Activated CD4-positive, alpha-beta T cell treated with anti-CD3 and anti-CD28 coated beads, Interleukin-2, amount 10 ng/mL, durations not matched to agents 24 days and 14 days (primary cell): ENCODE measurements at regions of chr9 and their contacts with region 1.

Region 1: GRCh38 chr9:84759300-84759750 is 89.8 kb downstream of the NTRK2 start:
- DNase-seq: peak; percentile 82
- H3K4me3 Mint-ChIP-seq: peak overlapping the region; percentile 60
- H3K27ac Mint-ChIP-seq: peak overlapping the region; percentile 85
- H3K4me1 Mint-ChIP-seq: peaks cover 37% of the 10 kb centered on the region
- H3K27me3 Mint-ChIP-seq: no peaks in the 10 kb centered on the region

Region 2: DNA sequence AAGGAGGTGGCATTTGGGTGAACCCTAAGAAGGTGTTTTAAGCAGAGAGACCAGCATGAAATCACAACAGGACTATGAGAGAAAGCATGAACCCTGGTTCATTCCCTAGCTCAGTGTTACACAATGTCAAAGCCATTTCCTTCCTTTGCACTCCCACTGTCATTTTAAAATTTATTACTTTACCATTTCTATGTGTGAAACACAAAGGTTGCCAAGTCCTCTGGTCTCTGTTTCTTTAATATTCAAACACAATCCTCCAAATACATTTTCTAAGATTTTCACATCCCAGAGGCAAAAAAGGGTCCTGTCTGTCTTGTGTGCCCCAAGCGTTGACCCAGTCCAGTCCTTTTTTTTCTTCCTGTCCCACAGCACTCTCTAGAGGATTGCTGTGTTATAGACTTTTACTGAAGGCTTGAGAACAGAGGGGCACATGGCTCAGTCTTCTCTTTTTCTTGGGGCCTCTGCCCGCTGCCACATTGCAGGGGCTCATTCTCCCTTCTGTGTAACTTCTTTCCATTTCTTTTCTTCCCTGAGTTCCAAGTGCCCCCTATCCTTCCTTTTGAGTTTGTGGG is 340.2 kb before region 1 on chr9:
- intact Hi-C with region 1: no loop called
- DNase-seq: no peak
- H3K4me3 Mint-ChIP-seq: no peak overlapping the region
- H3K27ac Mint-ChIP-seq: no peak overlapping the region
- H3K4me1 Mint-ChIP-seq: no peaks in the 10 kb centered on the region
- H3K27me3 Mint-ChIP-seq: no peaks in the 10 kb centered on the region

Region 3: DNA sequence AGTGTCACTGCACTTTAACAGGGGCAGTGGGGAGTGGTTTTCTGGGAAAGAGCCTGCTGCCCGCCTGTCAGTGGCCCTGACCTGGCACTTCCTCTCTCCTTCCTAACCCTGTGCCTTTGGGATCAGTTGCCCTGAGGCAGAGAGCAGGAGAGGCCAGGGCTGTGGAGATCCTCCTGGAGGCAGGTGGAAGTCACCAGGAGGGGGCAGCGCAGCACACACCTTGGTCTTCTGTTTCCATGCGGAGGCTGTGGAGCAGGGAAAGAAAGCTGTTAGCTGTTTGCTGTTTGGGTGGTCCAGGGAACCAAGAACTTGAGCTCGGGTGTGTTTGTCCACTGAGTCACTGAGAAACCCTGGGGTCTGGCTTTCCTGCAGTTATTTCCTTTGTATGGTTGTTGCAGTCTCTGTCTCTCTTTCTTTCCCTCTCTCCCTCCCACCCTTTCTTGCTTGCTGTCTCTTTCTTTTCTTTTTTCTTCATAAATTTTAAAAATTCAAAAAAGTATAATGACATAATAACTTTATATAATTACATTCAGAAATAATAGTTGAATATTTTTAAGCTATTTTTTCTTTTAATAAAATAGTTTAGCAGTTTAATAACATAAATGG is 61.7 kb before region 1 on chr9:
- intact Hi-C with region 1: loop called (anchors 2 kb)
- DNase-seq: peak; percentile 84
- H3K4me3 Mint-ChIP-seq: no peak overlapping the region
- H3K27ac Mint-ChIP-seq: no peak overlapping the region
- H3K4me1 Mint-ChIP-seq: peaks cover 15% of the 10 kb centered on the region
- H3K27me3 Mint-ChIP-seq: peaks cover 5% of the 10 kb centered on the region

Region 4: DNA sequence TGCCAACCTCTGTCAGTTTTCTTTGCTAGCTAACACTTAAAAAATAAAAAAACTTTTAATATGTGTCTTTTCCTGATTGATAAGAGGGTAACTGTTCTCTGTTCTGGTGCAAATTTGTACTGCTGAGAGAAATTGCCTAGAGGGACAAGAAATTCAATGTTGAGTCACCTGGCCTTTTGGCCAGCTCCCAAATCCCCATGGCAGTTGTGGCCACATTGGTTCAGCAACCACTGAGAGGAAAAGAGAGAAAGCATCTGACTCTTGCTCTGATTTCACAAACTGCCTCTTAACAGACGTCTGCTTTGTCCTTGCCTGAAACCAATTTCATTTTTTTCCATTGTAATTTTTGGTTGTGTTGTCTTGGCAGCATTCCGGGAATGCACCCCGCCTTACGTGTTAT is 47.4 kb before region 1 on chr9:
- intact Hi-C with region 1: loop called (anchors 2 kb)
- DNase-seq: no peak
- H3K4me3 Mint-ChIP-seq: no peak overlapping the region
- H3K27ac Mint-ChIP-seq: no peak overlapping the region
- H3K4me1 Mint-ChIP-seq: peaks cover 19% of the 10 kb centered on the region
- H3K27me3 Mint-ChIP-seq: peaks cover 18% of the 10 kb centered on the region

Region 5: GRCh38 chr9:84744195-84744594 is 15.1 kb before region 1 on chr9:
- intact Hi-C with region 1: loop called (anchors 1 kb)
- DNase-seq: no peak
- H3K4me3 Mint-ChIP-seq: no peak overlapping the region
- H3K27ac Mint-ChIP-seq: no peak overlapping the region
- H3K4me1 Mint-ChIP-seq: no peaks in the 10 kb centered on the region
- H3K27me3 Mint-ChIP-seq: peaks cover 4% of the 10 kb centered on the region